ENCODE measurements at regions of chr12 and their contacts with region 1.

Region 1: DNA sequence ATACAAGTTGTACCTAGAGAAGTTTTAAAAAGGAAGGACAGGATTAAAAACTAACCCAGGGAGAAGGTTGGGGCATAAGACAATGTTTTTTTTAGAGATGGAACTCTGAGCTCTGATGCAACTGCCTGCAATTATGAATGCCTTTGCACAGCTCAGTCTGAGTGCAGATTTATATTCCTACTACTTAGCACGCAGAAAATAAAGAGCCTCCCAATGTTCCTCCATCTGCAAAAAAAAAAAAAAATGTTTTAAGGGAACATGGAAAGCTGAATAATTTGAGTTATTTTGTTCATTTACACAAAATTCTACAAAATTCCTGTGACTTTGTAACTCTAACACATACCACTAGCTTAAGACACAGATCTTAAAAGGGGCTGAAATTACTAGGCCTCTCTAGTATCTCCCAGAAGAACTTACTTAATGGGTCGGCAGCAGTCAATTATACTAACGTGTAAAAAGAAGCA is 15.7 kb downstream of the CLIP1 start:
- DNase-seq: peak in 1 of 2 experiments; percentile 65
- H3K4me3 ChIP-seq: no peak overlapping the region
- H3K4me3 Mint-ChIP-seq: peak overlapping the region; percentile 35
- H3K27ac Mint-ChIP-seq: peak overlapping the region; percentile 93
- H3K4me1 ChIP-seq: peaks cover 26% of the 10 kb centered on the region
- H3K4me1 Mint-ChIP-seq: peaks cover 5% of the 10 kb centered on the region
- H3K27me3 ChIP-seq: no peaks in the 10 kb centered on the region
- H3K27me3 Mint-ChIP-seq: no peaks in the 10 kb centered on the region
- CTCF ChIP-seq: no peak

Region 2: GRCh38 chr12:122421821-122422729 is 15.3 kb after region 1 on chr12 and contains the start of gene CLIP1:
- CTCF ChIA-PET with region 1: interaction called, 5 read pairs
- POLR2A ChIA-PET with region 1: interaction called, 52 read pairs
- intact Hi-C with region 1: loop called (anchors 1 kb)
- DNase-seq: peak; percentile 81 to 86
- H3K4me3 ChIP-seq: peak within 1 kb of the TSS; percentile 66
- H3K4me3 Mint-ChIP-seq: peak within 1 kb of the TSS; percentile 89
- H3K27ac Mint-ChIP-seq: peak within 1 kb of the TSS; percentile 91
- H3K4me1 ChIP-seq: peaks cover 41% of the 10 kb centered on the region
- H3K4me1 Mint-ChIP-seq: peaks cover 14% of the 10 kb centered on the region
- H3K27me3 ChIP-seq: no peaks in the 10 kb centered on the region
- H3K27me3 Mint-ChIP-seq: no peaks in the 10 kb centered on the region
- CTCF ChIP-seq: peak; percentile 35 to 55
- total RNA-seq, gene CLIP1: 80.9 and 85.0 TPM in 2 replicates

Region 3: DNA sequence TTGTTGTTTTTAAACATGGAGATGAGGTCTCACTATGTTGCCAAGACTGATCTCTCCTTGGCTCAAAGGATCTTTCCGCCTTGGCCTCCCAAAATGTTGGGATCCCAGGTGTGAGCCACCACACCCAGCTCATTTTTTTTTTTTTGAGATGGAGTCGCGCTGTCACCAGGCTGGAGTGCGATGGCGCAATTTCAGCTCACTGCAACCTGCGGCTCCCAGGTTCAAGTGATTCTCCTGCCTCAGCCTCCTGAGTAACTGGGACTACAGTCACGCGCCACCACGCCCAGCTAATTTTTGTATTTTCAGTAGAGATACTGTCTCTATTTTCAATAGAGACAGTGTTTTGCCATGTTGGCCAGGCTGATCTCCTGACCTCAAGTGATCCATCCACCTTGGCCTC is 20.7 kb after region 1 on chr12:
- CTCF ChIA-PET with region 1: interaction called, 5 read pairs
- POLR2A ChIA-PET with region 1: interaction called, 52 read pairs
- intact Hi-C with region 1: loop called (anchors 1 kb)
- DNase-seq: no peak
- H3K4me3 ChIP-seq: no peak overlapping the region
- H3K4me3 Mint-ChIP-seq: no peak overlapping the region
- H3K27ac Mint-ChIP-seq: no peak overlapping the region
- H3K4me1 ChIP-seq: peaks cover 20% of the 10 kb centered on the region
- H3K4me1 Mint-ChIP-seq: peaks cover 14% of the 10 kb centered on the region
- H3K27me3 ChIP-seq: no peaks in the 10 kb centered on the region
- H3K27me3 Mint-ChIP-seq: no peaks in the 10 kb centered on the region
- CTCF ChIP-seq: no peak

Region 4: DNA sequence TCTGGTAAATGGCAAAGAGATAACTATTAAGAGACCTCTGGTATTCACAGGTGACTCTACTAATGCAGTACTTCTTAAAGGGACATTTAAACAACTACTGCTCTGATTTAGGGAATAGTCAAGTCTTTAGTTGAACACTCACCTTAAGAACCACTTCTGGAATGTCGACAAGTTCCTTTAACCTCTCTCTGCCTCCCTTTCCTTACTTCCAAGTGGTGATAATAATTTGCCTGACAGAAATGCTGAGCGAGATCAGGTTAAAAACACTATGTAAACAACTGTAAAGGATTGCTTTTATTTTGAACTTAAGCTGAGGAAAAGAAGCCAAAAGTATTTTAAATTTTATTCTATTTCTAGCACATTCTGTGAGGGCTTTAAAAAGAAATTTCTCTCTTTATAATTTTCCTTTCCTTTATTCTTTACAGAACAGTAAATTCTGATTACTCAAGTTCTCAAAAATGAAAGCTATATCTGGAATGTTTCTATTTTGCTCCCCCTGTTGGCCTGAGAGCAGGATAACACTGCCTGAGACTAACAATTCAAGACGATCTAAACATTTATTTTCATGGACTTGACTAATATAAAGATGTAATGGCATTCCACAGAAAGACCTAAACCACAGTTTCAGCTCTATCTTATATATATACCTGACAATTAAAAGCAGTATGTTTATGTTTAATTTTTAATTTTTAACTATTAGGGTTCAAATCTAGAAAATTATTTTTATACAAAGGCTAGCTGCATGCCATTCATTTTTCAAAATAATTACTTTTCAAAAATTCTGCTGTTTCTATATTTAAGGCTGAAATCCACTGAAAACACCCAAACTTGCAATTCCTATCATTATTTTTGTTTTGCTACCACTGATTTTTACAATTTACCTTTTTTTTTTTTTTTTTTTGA is 64.8 kb after region 1 on chr12:
- CTCF ChIA-PET with region 1: interaction called, 71 read pairs
- POLR2A ChIA-PET with region 1: no interaction called
- intact Hi-C with region 1: no loop called
- DNase-seq: peak in 1 of 2 experiments; percentile 64
- H3K4me3 ChIP-seq: no peak overlapping the region
- H3K4me3 Mint-ChIP-seq: no peak overlapping the region
- H3K27ac Mint-ChIP-seq: no peak overlapping the region
- H3K4me1 ChIP-seq: peaks cover 19% of the 10 kb centered on the region
- H3K4me1 Mint-ChIP-seq: no peaks in the 10 kb centered on the region
- H3K27me3 ChIP-seq: no peaks in the 10 kb centered on the region
- H3K27me3 Mint-ChIP-seq: no peaks in the 10 kb centered on the region
- CTCF ChIP-seq: peak; percentile 76 to 83

Region 5: DNA sequence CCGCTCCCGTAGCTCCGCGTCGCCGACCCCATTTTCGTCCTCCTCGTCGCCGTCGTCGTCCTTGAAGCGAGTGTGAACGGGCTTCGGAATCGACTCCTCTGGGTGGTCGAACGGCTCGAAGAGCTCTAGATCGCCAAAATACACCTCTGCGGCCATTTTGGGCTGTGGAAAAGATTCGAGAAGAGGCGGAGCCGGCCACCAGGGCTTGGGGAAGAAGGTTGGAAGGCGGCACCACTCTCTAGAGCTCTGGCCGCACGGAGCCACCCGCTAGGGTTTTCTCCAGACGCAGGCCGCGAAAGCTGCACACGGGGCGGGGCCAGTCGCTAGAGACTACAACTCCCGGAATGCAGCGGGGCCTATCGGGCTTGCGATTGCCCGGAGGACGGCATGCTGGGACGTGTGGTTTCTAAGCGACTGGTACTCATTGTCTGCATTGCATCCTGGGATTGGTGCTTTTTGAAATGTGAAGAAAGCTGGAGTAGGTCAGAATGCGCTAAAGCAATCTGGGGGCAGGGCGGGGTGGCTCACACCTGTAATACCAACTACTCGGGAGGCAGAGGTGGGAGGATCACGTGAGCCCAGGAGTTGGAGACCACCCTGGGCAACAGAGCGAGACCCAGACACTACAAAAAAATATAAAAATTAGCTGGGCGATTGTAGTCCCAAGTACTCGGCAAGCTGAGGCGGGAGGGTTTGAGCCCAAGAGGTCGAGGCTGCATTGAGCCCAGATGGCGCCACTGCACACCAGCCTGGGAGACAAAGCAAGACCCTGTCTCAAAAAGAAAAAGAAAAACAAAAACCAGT is 94.2 kb after region 1 on chr12 and contains the start of gene ZCCHC8:
- CTCF ChIA-PET with region 1: no interaction called
- POLR2A ChIA-PET with region 1: interaction called, 10 read pairs
- intact Hi-C with region 1: no loop called
- DNase-seq: peak; percentile 98
- H3K4me3 ChIP-seq: peak within 1 kb of the TSS; percentile 74
- H3K4me3 Mint-ChIP-seq: peak within 1 kb of the TSS; percentile 95
- H3K27ac Mint-ChIP-seq: peak within 1 kb of the TSS; percentile 99
- H3K4me1 ChIP-seq: 0 out of 2 replicates have a peak, but pooled peaks cover 8% of the 10 kb centered on the region
- H3K4me1 Mint-ChIP-seq: peaks cover 6% of the 10 kb centered on the region
- H3K27me3 ChIP-seq: no peaks in the 10 kb centered on the region
- H3K27me3 Mint-ChIP-seq: no peaks in the 10 kb centered on the region
- CTCF ChIP-seq: peak in 1 of 2 experiments; percentile 18
- total RNA-seq, gene ZCCHC8: 37.5 and 40.1 TPM in 2 replicates

Measured in Caco-2 (cell line).